Common myeloid progenitor, CD34-positive (primary cell): ENCODE measurements at regions of chr11 and their contacts with region 1.

Region 1: GRCh38 chr11:123478352-123478987 is 48.4 kb downstream of the GRAMD1B start:
- DNase-seq: peak; percentile 63 to 75 (median 74)
- H3K4me3 ChIP-seq: peak overlapping the region in 3 of 7 experiments; percentile 8 to 48 (median 23)
- H3K27ac ChIP-seq: no peak overlapping the region
- H3K4me1 ChIP-seq: peaks cover 12 to 68% (median 12%) of the 10 kb centered on the region in 4 experiments
- H3K27me3 ChIP-seq: no peaks in the 10 kb centered on the region

Region 2: DNA sequence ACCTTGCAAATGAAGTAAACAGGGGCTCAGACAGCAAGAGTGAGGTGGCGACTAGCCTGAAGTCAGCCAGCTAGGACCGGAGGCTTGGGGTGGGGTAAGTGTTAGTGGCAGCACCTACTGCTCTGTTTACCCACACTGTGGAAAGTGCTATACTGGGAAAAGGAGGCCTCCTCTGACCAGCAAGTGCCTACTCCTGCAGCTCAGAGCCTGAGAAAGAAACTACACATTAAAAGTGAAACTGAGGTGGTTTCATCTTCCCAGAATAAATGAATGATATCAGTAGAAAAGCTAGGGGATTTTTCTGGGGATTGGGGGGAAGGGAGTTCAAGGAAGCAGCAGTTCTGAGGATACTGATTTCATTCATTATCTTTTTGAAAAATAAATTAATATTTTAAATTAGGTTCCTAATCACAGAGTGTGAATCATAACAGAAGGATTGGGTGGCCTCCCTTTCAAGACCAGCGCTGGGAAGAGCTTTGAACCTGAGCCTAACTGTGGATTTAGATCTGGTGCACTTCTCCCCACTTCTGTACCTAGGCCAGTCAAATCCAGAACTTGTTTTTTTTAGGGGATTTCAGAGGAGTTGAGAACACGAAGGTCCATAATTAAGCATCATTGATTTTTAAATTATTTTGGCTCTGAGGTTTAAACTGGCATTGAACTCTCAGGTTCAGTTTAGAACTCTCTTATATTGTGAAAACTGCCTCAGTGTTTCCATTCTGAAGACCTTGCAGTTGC is 96.5 kb before region 1 on chr11:
- CTCF ChIA-PET with region 1: no interaction called
- POLR2A ChIA-PET with region 1: no interaction called
- DNase-seq: no peak
- H3K4me3 ChIP-seq: no peak overlapping the region
- H3K27ac ChIP-seq: no peak overlapping the region
- H3K4me1 ChIP-seq: no peaks in the 10 kb centered on the region
- H3K27me3 ChIP-seq: peaks cover 0 to 5% (median 0%) of the 10 kb centered on the region in 5 experiments

Region 3: DNA sequence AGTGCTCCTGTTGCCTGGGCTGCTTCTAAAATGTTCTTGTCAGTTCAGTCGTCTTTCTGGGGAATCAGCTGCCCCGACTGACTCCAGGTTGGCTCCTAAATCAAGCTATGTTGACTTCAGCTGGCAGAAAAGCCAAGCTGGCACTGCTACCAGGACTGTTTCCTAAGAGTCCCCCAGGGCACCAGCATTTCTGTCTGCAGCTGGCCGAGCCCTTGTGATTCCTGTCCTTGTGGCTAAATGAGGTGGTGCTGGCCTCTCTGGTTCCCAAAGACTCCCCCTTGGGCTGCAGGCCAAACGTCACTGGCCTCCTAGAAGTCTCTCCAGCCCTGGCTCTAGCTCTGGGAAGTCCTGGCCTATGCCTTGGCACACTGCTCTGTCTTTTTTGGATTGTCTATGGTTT is 17.3 kb before region 1 on chr11:
- CTCF ChIA-PET with region 1: interaction called, 18 read pairs
- POLR2A ChIA-PET with region 1: no interaction called
- DNase-seq: no peak
- H3K4me3 ChIP-seq: no peak overlapping the region
- H3K27ac ChIP-seq: no peak overlapping the region
- H3K4me1 ChIP-seq: peaks cover 5 to 17% (median 12%) of the 10 kb centered on the region in 4 experiments
- H3K27me3 ChIP-seq: no peaks in the 10 kb centered on the region

Region 4: DNA sequence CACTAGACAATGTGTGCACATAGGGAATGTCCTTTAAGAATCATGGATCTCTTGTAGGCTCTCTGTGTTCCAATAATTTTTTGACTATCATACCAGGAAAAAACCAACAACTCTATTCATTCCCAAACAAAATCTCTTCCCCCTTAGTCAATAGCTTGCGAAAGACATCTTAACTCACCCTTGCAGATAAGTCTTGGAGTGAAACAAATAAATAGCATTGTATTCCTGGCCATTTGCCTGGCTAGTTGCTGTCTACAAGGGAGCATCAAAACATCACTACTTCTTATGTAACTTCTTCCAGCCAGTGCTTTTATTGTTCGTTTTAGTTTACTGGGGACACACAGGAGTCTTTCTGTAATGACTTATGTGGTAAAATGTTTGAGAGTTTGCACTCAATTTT is 146.5 kb after region 1 on chr11:
- CTCF ChIA-PET with region 1: no interaction called
- POLR2A ChIA-PET with region 1: no interaction called
- DNase-seq: no peak
- H3K4me3 ChIP-seq: no peak overlapping the region
- H3K27ac ChIP-seq: no peak overlapping the region
- H3K4me1 ChIP-seq: peaks cover 0 to 8% (median 3%) of the 10 kb centered on the region in 4 experiments
- H3K27me3 ChIP-seq: no peaks in the 10 kb centered on the region